ENCODE measurements at regions of chr17 and their contacts with region 1.

Region 1: DNA sequence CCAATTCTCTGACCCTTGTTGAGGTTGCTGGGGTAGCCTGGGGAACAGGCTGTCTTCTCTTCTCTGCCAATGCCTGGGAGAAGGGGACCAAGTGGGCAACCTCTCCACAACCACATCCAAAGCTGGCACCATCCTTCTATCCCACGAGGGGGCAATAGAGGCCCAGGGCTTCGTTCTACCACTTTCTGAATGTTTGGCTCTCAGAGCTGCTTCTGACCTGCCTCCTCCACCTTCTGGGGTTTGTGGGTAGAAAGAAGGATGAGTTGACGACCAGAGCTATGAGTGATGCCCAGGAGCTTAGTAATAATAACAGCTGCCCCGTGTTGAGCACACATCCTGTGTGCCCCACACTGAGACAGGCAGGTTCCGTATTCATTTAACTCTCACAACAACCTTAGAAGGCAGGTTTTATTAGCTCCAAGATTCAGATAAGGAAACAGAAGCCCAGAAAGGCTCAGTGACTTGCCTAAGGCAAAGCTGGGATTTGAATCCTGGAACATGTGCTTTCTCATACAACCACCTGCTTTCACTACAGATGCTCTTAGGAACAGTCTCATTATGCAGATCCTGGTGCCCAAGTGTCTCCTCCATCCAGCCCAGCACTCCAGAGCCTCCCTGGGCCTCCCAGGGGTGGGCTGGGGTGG is 11.1 kb downstream of the TSPOAP1 start:
- DNase-seq: peak; percentile 77 to 92
- ATAC-seq: peak; percentile 80 to 94
- H3K4me3 ChIP-seq: no peak overlapping the region
- H3K27ac ChIP-seq: peak overlapping the region; percentile 5 to 24; a peak in 1 of 6 replicates
- H3K4me1 ChIP-seq: peaks cover 6% of the 10 kb centered on the region; the same call in 2 of the 3 replicates
- CTCF ChIP-seq: peak; percentile 96
- EP300 ChIP-seq: no peak
- POLR2A ChIP-seq: no peak
- RAD21 ChIP-seq: peak; percentile 98

Region 2: DNA sequence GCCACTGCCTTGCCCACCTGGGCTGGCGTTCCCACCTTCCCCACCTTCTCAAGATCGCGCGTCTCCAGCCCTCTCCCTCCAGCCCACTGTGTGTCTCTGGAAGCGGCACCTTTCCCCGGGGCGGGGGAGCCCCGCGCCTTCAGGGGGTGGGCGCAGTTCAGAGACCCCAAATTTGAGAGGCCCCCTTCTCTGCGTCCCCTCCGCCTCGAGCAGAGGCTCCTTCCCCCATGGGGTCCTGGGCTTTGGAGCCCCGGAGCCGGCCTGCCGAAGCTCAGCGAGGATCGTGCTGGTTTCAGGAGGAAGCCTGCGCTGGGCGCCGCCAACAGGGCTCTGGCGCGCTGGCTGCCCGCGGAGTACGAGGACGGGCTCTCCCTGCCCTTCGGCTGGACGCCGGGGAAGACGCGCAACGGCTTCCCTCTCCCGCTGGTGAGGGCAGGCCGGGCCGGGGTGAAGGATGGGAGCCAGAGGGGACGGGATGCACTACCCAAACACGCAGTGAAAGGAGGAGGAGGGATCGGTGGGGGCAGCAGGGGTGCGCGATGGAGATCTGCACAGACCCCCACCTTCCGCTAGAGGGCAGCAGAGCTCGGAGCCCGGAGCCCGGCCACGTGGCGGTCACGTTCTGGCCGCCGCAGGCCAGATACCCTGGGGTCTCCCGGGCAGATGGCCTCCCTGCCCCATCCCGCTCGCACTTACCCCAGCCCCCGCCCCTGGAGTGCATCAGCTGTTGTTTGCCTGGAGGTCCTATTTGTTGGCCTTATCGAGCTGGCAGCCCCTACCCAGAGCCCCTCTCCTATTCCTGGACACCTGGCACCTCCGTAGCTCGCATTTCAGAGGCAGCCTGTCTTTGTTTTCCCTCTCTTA is 68.0 kb before region 1 on chr17:
- CTCF ChIA-PET with region 1: interaction called, 12 read pairs
- POLR2A ChIA-PET with region 1: no interaction called
- DNase-seq: peak; percentile 60 to 95
- ATAC-seq: peak; percentile 70 to 91
- H3K4me3 ChIP-seq: peak overlapping the region; percentile 43
- H3K27ac ChIP-seq: peak overlapping the region; percentile 52 to 72; a peak in 5 of 6 replicates
- H3K4me1 ChIP-seq: peaks cover 8% of the 10 kb centered on the region
- CTCF ChIP-seq: peak; percentile 94
- EP300 ChIP-seq: no peak
- POLR2A ChIP-seq: no peak
- RAD21 ChIP-seq: peak; percentile 58 to 79

Region 3: DNA sequence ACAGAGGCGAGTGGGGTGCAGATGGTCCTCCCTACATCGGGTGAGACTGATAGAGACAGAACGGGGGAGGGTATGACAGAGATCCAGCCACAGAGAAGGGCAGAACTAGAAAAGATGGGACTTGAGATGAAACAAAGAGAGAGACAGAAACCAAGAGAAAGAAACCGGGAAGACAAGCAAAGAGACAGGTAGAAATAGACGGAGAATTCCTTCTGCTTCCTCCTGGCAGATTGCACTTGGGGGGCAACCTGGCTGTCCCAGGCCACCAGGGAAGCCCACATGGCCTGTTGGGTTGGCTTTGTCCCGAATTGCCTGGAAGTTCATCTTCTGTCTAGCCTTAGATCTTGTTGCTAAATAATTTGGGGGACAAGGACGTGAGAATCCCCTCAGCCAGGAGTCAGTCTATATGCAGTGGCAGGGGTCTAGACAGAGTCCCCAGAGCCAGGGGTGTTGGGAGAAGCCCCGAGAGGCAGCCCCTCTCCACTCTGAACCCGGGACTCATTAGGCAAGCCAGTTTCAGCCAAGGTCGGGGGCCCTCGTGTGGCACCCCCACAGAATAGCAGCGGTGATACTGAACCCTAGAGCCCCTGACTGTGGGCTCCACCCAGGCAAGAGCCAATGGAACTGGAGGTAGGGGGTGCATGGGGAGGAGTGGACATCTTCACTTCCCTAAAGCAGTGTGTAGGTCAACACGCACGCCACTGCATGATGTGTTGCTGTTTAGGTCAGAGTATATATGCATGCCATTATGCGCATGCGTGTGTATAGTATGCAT is 11.7 kb after region 1 on chr17:
- CTCF ChIA-PET with region 1: interaction called, 34 read pairs
- POLR2A ChIA-PET with region 1: no interaction called
- DNase-seq: no peak
- ATAC-seq: peak; percentile 25 to 67; a peak in 4 of 6 replicates
- H3K4me3 ChIP-seq: no peak overlapping the region
- H3K27ac ChIP-seq: 0 out of 6 replicates have a peak overlapping the region, but pooled peaks of 1 of the 2 experiments have one; percentile 4
- H3K4me1 ChIP-seq: peaks cover 9% of the 10 kb centered on the region
- CTCF ChIP-seq: peak; percentile 36
- EP300 ChIP-seq: no peak
- POLR2A ChIP-seq: no peak
- RAD21 ChIP-seq: peak in 1 of 2 experiments; percentile 14; a peak in 1 of 5 replicates

Region 4: DNA sequence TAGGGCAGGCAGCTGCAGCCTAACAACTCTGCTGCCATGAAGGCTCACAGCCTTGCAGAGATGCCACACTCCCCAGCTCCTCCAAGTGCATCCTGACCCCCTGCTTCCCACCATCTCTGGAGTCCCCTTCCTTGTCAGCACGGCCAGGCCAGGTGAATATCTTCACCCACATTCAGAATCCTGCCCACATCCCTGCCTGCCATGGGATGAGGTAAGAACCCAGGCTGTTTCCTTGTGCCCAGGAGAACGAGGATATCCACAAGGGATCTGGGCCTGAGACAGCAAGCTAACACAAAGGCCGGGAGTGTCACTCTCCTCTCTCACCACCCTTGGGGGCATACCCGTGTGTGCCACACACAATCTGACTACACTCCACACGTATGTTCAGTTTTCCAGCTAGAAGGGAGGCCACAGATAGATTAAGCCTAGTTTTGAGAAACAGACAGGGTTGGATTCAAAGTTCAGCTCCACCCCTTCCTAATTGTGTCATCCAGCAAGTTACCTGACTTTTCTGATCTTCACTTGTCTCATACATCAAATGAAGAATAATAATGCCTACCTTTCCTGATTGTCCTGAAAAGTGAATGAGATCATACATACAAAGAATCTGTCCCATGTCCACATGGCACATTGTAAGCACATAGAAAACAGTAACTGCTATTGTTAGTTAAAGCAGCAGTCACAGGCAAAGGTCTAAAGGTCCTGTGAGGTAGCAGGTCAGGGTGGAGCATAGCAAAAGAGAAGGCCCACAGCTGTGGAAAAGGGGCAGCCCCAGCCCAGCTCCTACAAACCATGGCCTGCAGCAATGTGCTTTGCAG is 51.9 kb after region 1 on chr17:
- CTCF ChIA-PET with region 1: interaction called, 10 read pairs
- POLR2A ChIA-PET with region 1: no interaction called
- DNase-seq: no peak
- ATAC-seq: no peak
- H3K4me3 ChIP-seq: no peak overlapping the region
- H3K27ac ChIP-seq: no peak overlapping the region
- H3K4me1 ChIP-seq: peaks cover 10% of the 10 kb centered on the region
- CTCF ChIP-seq: no peak
- EP300 ChIP-seq: no peak
- POLR2A ChIP-seq: no peak
- RAD21 ChIP-seq: no peak

Region 5: GRCh38 chr17:58402047-58402446 is 84.5 kb after region 1 on chr17:
- CTCF ChIA-PET with region 1: interaction called, 11 read pairs
- POLR2A ChIA-PET with region 1: no interaction called
- DNase-seq: no peak
- ATAC-seq: no peak
- H3K4me3 ChIP-seq: no peak overlapping the region
- H3K27ac ChIP-seq: peak overlapping the region in 1 of 2 experiments; percentile 0; a peak in 1 of 6 replicates
- H3K4me1 ChIP-seq: peaks cover 24% of the 10 kb centered on the region
- CTCF ChIP-seq: no peak
- EP300 ChIP-seq: no peak
- POLR2A ChIP-seq: no peak
- RAD21 ChIP-seq: no peak

Region 6: DNA sequence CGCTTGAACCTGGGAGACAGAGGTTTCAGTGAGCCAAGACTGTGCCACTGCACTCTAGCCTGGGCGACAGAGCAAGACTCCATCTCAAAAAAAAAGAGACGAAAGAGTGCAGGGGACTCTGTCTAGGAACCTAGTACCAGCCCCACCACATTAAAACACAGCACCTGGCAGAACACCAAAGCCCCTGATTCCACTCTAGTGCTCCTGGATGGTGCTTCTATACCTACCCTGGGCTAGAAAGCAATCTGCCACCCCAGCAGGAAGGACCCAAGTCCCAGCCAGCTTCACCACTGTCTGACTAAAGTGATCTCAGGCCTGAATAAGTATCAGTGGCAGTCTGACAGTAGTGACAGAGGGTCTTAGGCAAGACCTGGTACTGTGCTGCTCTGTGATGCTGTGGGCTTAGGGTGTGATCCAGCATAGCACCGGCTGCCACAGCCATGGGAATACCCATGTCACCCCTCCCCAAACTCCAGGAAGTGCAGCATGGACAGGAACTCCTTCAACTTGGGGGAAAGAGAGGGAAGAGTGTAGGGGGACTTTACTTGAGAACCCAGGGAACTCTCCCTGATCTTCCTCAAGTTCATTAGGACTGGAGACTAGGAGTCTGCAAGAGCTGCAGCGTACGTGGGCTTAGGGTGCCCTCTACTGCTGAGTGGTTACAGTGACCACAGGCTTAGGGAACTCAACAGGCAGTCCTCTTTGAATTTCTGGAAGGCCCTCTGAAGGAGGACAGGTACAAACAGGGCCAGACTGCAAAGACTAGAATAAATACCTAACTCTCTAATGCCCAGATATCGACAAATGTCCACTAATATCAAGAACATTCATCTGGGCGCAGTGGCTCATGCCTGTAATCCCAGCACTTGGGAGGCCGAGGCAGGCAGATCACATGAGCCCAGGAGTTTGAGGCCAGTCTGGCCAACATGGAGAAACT is 129.8 kb after region 1 on chr17:
- CTCF ChIA-PET with region 1: interaction called, 315 read pairs
- POLR2A ChIA-PET with region 1: interaction called, 4 read pairs
- DNase-seq: peak; percentile 83 to 92
- ATAC-seq: peak; percentile 100
- H3K4me3 ChIP-seq: no peak overlapping the region
- H3K27ac ChIP-seq: no peak overlapping the region
- H3K4me1 ChIP-seq: no peaks in the 10 kb centered on the region
- CTCF ChIP-seq: peak; percentile 99
- EP300 ChIP-seq: no peak
- POLR2A ChIP-seq: no peak
- RAD21 ChIP-seq: peak; percentile 99 to 100

Region 7: DNA sequence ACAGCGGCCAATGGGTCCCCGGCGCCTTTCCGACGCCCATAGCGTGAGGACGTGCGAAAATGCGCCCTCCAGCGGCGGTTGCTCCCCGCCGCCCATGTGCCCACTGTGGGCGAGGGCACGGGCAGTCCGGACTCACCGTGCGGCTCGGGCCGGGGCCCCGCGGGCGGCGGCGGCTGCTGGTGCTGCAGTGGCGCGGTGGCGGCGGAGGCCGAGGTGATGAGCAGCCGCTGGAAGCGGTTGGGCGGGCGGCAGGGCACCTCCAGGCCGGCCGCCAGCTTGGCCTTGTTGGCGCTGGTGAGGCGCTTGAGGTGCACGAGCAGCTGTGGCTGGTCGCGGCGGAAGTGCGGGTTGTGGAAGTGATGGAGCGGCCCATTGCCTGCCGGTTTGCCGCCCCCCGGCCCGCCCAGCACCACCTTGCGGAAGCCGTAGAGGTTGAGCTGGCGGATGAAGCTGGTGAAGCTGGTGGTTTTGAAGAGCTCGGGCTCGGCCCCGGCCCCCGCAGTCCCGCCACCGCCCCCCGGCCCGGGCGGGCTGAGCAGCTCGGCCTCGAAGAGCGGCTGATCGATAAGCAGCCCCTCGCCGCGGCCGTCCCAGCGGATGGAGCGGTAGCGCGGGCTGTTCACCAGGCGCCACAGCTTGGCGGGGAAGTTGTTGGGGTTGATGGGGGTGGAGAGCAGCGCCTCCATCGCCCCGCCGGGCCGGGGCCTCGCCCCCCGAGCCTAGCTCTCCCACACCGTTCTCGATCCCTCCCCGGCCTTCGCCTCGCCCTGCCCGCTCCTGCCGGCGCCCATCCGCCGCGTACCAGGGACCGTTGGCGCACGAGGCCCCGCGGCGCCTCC is 170.3 kb after region 1 on chr17 and contains the start of gene HSF5:
- CTCF ChIA-PET with region 1: no interaction called
- POLR2A ChIA-PET with region 1: no interaction called
- DNase-seq: no peak
- ATAC-seq: no peak
- H3K4me3 ChIP-seq: no peak within 1 kb of the TSS
- H3K27ac ChIP-seq: no peak within 1 kb of the TSS
- H3K4me1 ChIP-seq: no peaks in the 10 kb centered on the region
- CTCF ChIP-seq: no peak
- EP300 ChIP-seq: no peak
- POLR2A ChIP-seq: no peak
- RAD21 ChIP-seq: no peak
- polyA plus RNA-seq, gene HSF5: not detected in 2 replicates

Region 8: DNA sequence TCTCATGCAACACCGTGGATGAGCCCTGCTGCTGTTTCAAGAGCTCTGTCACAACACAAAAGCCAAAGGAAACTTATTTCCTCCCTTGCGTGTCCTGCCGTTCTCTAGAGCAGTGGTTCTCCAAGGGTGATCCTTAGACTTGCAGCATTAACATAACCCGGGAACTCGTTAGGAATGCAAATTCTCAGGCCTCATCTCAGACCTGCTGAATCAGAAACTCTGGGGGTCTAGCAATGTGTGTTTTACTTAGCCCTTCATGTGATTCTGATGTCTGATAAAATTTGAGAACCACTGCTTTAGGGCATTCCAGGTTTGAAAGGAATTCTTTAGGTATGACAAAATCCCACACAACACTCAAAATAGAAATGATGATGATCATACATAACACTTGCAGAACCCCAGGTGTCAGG is 248.2 kb after region 1 on chr17:
- CTCF ChIA-PET with region 1: no interaction called
- POLR2A ChIA-PET with region 1: no interaction called
- DNase-seq: no peak
- ATAC-seq: no peak
- H3K4me3 ChIP-seq: no peak overlapping the region
- H3K27ac ChIP-seq: no peak overlapping the region
- H3K4me1 ChIP-seq: no peaks in the 10 kb centered on the region
- CTCF ChIP-seq: no peak
- EP300 ChIP-seq: no peak
- POLR2A ChIP-seq: no peak
- RAD21 ChIP-seq: no peak